Posterior vena cava (tissue), 2 donors: ENCODE measurements at regions of chr1 and their contacts with region 1.

Region 1: GRCh38 chr1:239084459-239085080 is 301.8 kb upstream of the CHRM3 start:
- DNase-seq: peak; percentile 64

Region 2: DNA sequence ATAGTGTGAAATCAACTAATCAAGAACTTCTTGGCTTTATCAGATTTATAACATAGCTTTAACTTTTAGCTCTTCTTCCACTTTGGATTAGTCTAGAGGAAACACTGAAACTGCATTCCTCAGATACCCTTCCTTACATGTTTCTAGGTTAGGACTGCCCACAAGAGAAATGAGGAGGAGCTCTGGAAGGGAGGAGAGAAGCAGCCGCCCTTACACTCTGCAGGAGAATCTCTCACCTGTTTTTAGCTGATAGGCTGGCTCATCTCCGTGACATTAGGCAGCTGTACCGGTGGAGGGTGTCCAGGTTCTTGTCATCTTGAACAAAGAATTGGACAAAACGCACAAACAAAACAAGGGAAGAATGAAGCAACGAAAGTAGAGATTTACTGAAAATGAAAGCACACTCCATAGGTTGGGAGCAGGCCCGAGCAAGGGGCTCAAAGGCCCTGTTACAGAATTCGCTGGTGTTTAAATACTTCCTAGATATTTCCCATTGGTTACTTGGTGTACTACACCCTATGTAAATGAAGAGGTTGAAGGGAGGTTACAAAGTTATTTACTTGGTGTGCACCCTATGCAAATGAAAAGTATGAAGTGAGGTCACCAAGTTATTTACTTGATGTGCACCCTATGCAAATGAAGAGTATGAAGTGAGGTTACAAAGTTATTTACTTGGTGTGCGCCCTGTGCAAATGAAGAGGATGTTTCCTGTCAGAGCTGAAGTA is 223.1 kb before region 1 on chr1:
- intact Hi-C with region 1: no loop called
- DNase-seq: no peak

Region 3: DNA sequence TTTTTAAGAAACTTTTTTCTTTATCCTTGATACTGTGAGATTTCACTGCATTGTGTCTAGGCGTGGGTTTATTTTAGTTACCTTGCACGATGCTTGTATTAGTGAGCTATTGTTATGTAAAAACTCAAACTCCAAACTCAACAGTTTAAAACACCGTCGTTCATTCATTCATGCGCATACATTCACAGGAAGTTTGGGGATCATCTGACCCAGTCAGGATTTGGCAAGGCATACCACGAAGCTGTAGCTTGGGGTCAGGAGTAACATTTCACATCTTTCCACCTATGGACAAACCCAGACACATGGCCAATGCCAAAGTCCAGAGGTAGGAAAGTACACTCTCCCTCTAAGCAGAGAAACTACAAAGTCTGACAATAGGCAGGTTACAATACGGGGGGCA is 22.8 kb before region 1 on chr1:
- intact Hi-C with region 1: loop called in 1 of 2 experiments (anchors 2 kb)
- DNase-seq: no peak

Region 4: DNA sequence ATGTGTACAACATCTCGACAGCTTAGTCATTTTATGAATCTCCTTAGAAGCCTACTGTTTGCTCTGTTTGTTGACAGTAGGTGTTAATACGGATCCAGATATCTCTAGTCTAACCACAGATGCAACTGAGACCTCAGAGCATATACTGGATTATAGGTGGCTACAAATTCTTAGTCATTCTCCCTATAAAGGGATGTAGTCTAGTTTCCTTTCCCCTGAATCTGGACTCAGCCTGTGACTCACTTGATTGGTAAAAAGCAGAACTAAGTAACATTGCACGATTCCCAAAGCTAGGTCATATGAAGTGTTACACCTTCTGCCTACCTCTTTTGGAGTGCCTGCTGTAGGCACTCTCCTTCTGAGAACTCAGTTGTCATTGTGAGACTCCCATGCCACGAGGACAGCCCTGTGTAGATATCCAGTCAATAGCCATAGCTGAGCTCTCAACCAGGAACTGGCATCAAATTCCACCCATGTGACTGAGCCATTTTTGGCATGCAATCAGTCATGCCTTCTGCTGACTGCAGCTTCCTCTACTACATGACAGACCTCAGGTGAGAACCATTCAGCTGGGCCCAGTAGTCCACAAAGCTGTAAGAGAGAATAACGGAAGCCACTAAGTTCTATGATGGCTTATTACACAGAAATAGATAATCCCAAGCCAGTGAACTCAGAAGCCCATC is 165.9 kb after region 1 on chr1:
- intact Hi-C with region 1: no loop called
- DNase-seq: no peak

Region 5: DNA sequence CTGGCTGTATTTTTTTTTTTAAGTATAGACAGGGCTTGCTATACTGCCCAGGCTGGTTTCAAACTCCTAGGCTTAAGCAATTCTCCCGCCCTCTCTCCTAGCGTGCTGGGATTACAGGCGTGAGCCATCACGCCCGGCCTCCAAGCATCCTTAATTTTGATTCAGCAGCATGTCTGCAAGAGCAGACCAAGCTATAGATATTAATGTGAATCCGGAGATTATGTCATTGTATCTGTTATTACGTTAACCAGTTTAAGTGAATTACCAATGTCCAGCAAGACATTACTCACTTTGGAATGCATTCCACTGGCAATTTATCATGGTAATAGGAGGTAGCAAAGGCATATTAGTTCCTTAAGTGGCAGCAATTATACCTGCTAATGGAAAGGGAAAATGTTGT is 481.5 kb after region 1 on chr1:
- intact Hi-C with region 1: loop called in 1 of 2 experiments (anchors 5 kb)
- DNase-seq: no peak